IMR-90 (cell line): ENCODE measurements at regions of chr17 and their contacts with region 1.

Region 1: DNA sequence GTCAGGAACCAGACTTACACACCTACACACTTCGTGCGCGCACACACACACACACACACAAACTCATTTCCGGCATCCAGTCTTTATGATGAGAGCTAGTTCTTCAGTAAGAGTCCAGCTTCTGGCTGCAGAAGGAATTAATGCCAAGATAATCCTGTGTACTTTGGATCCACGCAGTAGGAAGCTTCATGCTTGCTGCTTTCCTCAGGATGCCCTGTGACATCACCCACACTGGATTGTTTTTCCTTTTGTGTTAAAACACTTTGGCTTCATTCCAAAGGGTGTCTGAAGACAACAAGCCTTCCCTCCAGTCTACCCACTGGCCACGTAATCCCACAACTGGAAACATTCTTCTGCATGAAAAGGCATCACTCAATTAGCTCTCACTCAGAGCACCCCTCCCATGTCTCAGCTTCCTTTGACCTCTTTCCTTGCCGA is 35.4 kb downstream of the KCNJ16 start:
- DNase-seq: peak; percentile 36
- ATAC-seq: no peak
- H3K4me3 ChIP-seq: no peak overlapping the region
- H3K27ac ChIP-seq: no peak overlapping the region
- H3K4me1 ChIP-seq: no peaks in the 10 kb centered on the region; the same call in 1 of the 2 replicates
- H3K27me3 ChIP-seq: no peaks in the 10 kb centered on the region; the same call in 1 of the 2 replicates
- CTCF ChIP-seq: no peak
- POLR2A ChIP-seq: no peak
- RAD21 ChIP-seq: no peak

Region 2: GRCh38 chr17:68135141-68135887 is 1975.1 kb before region 1 on chr17:
- CTCF ChIA-PET with region 1: no interaction called
- POLR2A ChIA-PET with region 1: interaction called, 12 read pairs
- dilution Hi-C with region 1: no loop called
- in situ Hi-C with region 1: no loop called
- intact Hi-C with region 1: no loop called
- DNase-seq: no peak
- ATAC-seq: no peak
- H3K4me3 ChIP-seq: no peak overlapping the region
- H3K27ac ChIP-seq: no peak overlapping the region
- H3K4me1 ChIP-seq: no peaks in the 10 kb centered on the region
- H3K27me3 ChIP-seq: no peaks in the 10 kb centered on the region
- CTCF ChIP-seq: no peak
- POLR2A ChIP-seq: no peak
- RAD21 ChIP-seq: no peak